ENCODE measurements at regions of chr6 and their contacts with region 1.

Region 1: DNA sequence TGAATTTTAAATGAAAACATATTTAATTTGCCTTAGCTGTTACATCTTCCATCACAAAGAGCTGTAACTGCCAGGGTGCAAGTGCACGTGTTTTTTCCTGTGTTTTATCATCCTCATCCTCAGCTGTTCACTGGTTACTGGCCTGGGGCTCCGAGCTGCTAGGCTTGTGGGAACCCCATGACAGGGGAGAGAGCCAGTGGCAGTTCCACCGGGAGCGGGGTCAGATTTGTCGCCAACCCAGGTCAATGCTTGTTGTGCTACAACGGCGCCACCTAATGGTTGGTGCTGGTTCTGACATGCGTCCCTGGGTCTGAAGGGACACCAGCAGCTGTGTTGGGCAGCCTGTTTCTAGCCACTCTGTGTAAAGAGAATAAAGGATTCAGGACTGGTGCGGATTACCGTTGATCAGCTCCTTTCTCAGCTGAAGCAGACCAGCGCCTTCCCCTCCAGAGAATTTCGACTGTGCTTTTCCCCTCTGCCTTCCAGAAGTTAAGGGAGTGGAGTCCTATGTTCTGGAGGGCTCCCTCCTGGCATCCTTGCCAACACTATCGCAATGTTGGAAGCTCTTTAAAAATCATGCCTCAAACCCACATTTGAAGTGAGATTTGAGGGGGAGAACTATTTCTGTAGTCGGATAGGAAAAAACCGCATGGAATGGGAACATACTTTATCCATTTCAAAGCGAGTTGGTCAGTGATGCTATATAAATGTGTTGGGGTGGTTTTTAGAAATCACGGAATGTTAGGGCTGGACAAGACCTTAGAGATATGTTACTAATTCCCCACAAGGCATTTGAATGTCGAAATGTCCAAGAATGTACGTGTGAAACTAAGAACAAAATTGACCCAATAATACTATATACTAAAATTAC is 32.1 kb downstream of the SUMO4 start:
- DNase-seq: peak; percentile 95
- H3K4me3 ChIP-seq: no peak overlapping the region
- H3K27ac ChIP-seq: no peak overlapping the region
- H3K4me1 ChIP-seq: peaks cover 0 to 11% (median 4%) of the 10 kb centered on the region in 6 donors
- H3K27me3 ChIP-seq: no peaks in the 10 kb centered on the region
- CTCF ChIP-seq: peak; percentile 90 to 97 (median 95)
- POLR2A ChIP-seq: no peak

Region 2: DNA sequence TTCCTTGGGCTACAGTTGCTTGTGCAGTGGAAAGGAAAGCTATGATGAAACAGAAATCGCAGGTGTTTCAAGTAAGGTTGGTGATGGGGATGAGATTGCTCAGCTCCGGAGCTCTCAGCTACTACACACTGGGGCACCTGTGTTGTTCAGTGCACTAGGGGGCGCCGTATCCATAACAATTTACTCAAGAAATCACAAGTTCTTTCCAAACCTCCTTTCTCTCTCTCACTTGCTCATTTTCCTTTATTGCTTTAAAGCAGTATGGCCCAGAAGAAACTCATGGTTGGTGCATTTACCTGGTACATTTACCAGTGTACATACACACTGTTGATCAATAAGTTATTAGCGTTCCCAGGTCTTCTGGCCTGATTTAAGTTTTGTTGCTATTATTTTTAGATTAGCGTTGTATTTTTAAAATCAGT is 349.8 kb before region 1 on chr6:
- intact Hi-C with region 1: loop called (anchors 2 kb)
- DNase-seq: peak; percentile 87
- H3K4me3 ChIP-seq: no peak overlapping the region
- H3K27ac ChIP-seq: no peak overlapping the region
- H3K4me1 ChIP-seq: peaks cover 0 to 39% (median 17%) of the 10 kb centered on the region in 6 donors
- H3K27me3 ChIP-seq: no peaks in the 10 kb centered on the region
- CTCF ChIP-seq: peak; percentile 67 to 91 (median 82)
- POLR2A ChIP-seq: no peak